PC-9 (cell line): ENCODE measurements at regions of chr10 and their contacts with region 1.

Region 1: DNA sequence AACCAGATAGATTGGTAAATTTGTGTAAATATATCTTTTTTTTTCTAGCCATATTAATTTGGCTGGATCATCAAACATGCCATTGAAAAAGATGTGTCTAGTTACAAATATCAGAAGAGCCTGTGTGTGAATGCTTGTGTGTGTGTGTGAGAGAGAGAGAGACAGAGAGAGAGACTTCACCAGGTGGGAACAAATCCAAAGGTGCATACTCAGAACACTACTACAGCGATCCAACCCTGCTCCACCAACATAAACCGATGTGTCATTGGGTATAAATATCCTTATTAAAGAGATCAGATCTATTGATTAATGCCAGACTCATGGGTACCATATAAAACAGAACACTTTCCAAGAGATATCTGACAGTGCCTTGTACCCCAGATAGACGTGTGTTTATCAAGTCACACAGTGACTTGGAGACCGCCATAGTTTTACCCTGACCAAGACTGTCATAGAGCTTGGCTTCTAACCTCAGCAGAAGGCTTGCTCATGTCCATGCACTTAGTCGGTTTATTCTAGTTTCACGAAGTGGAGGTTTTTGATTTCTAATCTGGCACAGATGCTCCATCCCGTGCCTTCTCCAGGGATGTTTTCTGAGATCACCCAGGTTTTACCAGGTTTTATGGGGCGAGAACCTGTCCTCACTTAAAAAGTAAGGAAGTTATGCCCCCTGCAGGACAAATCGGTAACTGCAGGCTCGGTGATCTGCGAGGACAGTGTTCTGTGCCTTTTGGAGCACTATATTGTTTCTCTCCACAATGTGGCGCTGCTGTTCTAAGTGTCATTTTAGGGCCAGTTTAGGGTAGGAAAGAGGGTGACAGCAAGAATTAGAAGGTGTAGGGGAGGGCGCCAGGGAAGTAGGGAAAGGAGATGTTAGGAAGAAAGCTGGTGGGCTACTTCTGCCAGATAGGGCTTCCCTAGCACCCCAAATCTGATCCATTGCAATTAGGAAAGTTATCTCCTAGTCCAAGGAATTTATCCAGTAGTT is 29.3 kb upstream of the WNT8B start:
- DNase-seq: peak; percentile 80 to 84
- H3K4me3 ChIP-seq: no peak overlapping the region
- H3K27ac ChIP-seq: no peak overlapping the region
- H3K4me1 ChIP-seq: no peaks in the 10 kb centered on the region
- H3K27me3 ChIP-seq: no peaks in the 10 kb centered on the region
- CTCF ChIP-seq: peak; percentile 97

Region 2: GRCh38 chr10:100338434-100339036 is 95.0 kb before region 1 on chr10:
- CTCF ChIA-PET with region 1: interaction called, 6 read pairs
- POLR2A ChIA-PET with region 1: no interaction called
- intact Hi-C with region 1: loop called (anchors 1 kb)
- DNase-seq: peak in 1 of 2 experiments; percentile 66
- H3K4me3 ChIP-seq: no peak overlapping the region
- H3K27ac ChIP-seq: no peak overlapping the region
- H3K4me1 ChIP-seq: 0 out of 2 replicates have a peak, but pooled peaks cover 7% of the 10 kb centered on the region
- H3K27me3 ChIP-seq: peaks cover 19% of the 10 kb centered on the region
- CTCF ChIP-seq: peak; percentile 84

Region 3: DNA sequence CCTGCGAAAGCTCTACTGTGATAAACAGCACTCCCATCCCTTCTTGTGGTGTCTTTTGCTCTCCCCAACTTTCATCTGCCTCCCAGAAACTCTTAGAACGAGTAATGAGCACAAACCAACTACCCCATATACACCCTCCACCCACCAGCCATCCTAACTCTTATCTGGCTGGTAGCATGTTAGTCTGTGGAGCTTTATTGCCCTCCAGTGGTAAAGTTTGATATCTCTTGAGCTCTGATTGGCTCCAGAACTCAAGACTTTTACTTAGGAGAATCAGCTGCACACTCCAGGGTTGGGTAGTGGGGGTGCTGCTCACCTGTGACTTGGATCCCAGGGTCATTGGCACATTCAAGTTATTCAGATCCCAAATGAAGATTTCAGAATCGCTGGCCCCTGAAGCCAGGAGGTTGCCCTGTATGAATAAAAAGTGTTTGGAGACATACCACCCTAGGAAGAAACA is 75.2 kb after region 1 on chr10:
- CTCF ChIA-PET with region 1: no interaction called
- POLR2A ChIA-PET with region 1: no interaction called
- intact Hi-C with region 1: loop called (anchors 1 kb)
- DNase-seq: peak in 1 of 2 experiments; percentile 5
- H3K4me3 ChIP-seq: no peak overlapping the region
- H3K27ac ChIP-seq: no peak overlapping the region
- H3K4me1 ChIP-seq: peaks cover 16% of the 10 kb centered on the region
- H3K27me3 ChIP-seq: no peaks in the 10 kb centered on the region
- CTCF ChIP-seq: peak; percentile 73

Region 4: GRCh38 chr10:100878291-100878910 is 444.9 kb after region 1 on chr10:
- CTCF ChIA-PET with region 1: no interaction called
- POLR2A ChIA-PET with region 1: no interaction called
- intact Hi-C with region 1: loop called (anchors 1 kb)
- DNase-seq: peak; percentile 43 to 46
- H3K4me3 ChIP-seq: no peak overlapping the region
- H3K27ac ChIP-seq: no peak overlapping the region
- H3K4me1 ChIP-seq: no peaks in the 10 kb centered on the region
- H3K27me3 ChIP-seq: 0 out of 2 replicates have a peak, but pooled peaks cover 8% of the 10 kb centered on the region
- CTCF ChIP-seq: peak; percentile 71